Natural killer cell (primary cell): ENCODE measurements at regions of chr17 and their contacts with region 1.

Region 1: GRCh38 chr17:81860756-81861518 is 602 bp upstream of the P4HB start:
- DNase-seq: peak; percentile 100
- ATAC-seq: peak; percentile 83 to 95 (median 84)
- H3K4me3 ChIP-seq: peak overlapping the region; percentile 62
- H3K4me3 Mint-ChIP-seq: peak overlapping the region; percentile 93
- H3K27ac ChIP-seq: peak overlapping the region; percentile 98
- H3K27ac Mint-ChIP-seq: peak overlapping the region; percentile 96 to 99
- H3K4me1 ChIP-seq: peaks cover 32% of the 10 kb centered on the region
- H3K4me1 Mint-ChIP-seq: peaks cover 21 to 36% of the 10 kb centered on the region in 2 donors
- H3K27me3 ChIP-seq: no peaks in the 10 kb centered on the region
- H3K27me3 Mint-ChIP-seq: peaks cover 0 to 3% of the 10 kb centered on the region in 2 donors
- CTCF ChIP-seq: no peak

Region 2: GRCh38 chr17:81741594-81742452 is 119.1 kb before region 1 on chr17:
- intact Hi-C with region 1: no loop called
- DNase-seq: peak in 1 of 2 donors; percentile 3
- ATAC-seq: no peak
- H3K4me3 ChIP-seq: no peak overlapping the region
- H3K4me3 Mint-ChIP-seq: no peak overlapping the region
- H3K27ac ChIP-seq: no peak overlapping the region
- H3K27ac Mint-ChIP-seq: peak overlapping the region in 1 of 2 donors; percentile 82
- H3K4me1 ChIP-seq: no peaks in the 10 kb centered on the region
- H3K4me1 Mint-ChIP-seq: peaks cover 0 to 10% of the 10 kb centered on the region in 2 donors
- H3K27me3 ChIP-seq: no peaks in the 10 kb centered on the region
- H3K27me3 Mint-ChIP-seq: peaks cover 0 to 4% of the 10 kb centered on the region in 2 donors
- CTCF ChIP-seq: no peak

Region 3: GRCh38 chr17:81833160-81833920 is 27.6 kb before region 1 on chr17 and contains the start of gene MCRIP1:
- intact Hi-C with region 1: loop called (anchors 2 kb)
- DNase-seq: peak; percentile 94 to 97
- ATAC-seq: peak; percentile 82 to 86 (median 85)
- H3K4me3 ChIP-seq: peak within 1 kb of the TSS; percentile 71
- H3K4me3 Mint-ChIP-seq: peak within 1 kb of the TSS; percentile 96
- H3K27ac ChIP-seq: peak within 1 kb of the TSS; percentile 93
- H3K27ac Mint-ChIP-seq: peak within 1 kb of the TSS; percentile 94
- H3K4me1 ChIP-seq: peaks cover 26% of the 10 kb centered on the region
- H3K4me1 Mint-ChIP-seq: peaks cover 17 to 25% of the 10 kb centered on the region in 2 donors
- H3K27me3 ChIP-seq: no peaks in the 10 kb centered on the region
- H3K27me3 Mint-ChIP-seq: no peaks in the 10 kb centered on the region
- CTCF ChIP-seq: no peak
- total RNA-seq, gene MCRIP1: 81.1 to 95.5 (median 84.2) TPM